Naive thymus-derived CD4-positive, alpha-beta T cell (primary cell): ENCODE measurements at regions of chr12 and their contacts with region 1.

Region 1: GRCh38 chr12:94149119-94149780 is 873 bp downstream of the PLXNC1 start:
- DNase-seq: peak; percentile 23 to 70 (median 45)
- ATAC-seq: peak; percentile 51
- H3K4me3 ChIP-seq: peak overlapping the region; percentile 75
- H3K4me3 Mint-ChIP-seq: peak overlapping the region; percentile 76 to 97 (median 93)
- H3K27ac ChIP-seq: peak overlapping the region; percentile 17
- H3K27ac Mint-ChIP-seq: peak overlapping the region in 3 of 9 donors; percentile 51 to 67 (median 63)
- H3K4me1 ChIP-seq: peaks cover 0 to 17% of the 10 kb centered on the region in 2 donors
- H3K4me1 Mint-ChIP-seq: peaks cover 18 to 53% (median 39%) of the 10 kb centered on the region in 7 donors
- H3K27me3 ChIP-seq: no peaks in the 10 kb centered on the region
- H3K27me3 Mint-ChIP-seq: peaks cover 0 to 31% (median 0%) of the 10 kb centered on the region in 5 donors

Region 2: DNA sequence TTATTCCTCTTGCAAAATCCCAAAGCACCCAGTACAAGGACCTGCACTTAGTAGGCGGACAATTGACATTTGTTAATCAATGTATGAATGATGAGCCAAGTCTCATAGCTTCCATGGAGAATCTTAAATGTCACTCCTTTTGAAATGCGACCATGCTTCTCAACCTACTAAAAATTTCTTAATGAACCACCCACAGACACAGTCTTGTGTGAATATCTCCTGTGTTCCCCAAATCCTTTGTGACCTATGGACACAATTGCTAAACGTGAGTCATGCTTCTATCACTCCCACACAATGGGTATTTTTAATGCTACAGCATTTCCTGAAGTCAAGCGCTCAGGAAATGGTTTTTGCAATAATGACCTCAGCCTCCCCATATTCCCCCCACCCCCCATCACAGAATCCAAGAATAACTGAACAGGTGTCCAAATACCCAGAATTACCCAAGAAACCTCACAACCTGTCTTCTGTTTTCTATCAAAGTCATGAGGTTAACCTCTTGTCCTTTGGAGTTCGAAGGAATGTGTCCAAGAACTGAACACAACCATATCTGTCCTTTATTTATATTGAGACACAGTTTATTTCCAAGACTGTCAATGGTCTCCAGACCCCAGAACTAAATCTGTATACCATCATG is 1610.0 kb before region 1 on chr12:
- CTCF ChIA-PET with region 1: no interaction called
- POLR2A ChIA-PET with region 1: no interaction called
- intact Hi-C with region 1: no loop called
- DNase-seq: no peak
- ATAC-seq: peak; percentile 77
- H3K4me3 ChIP-seq: no peak overlapping the region
- H3K4me3 Mint-ChIP-seq: peak overlapping the region in 5 of 10 donors; percentile 14 to 69 (median 22)
- H3K27ac ChIP-seq: no peak overlapping the region
- H3K27ac Mint-ChIP-seq: peak overlapping the region in 6 of 9 donors; percentile 0 to 90 (median 68)
- H3K4me1 ChIP-seq: peaks cover 23 to 44% of the 10 kb centered on the region in 2 donors
- H3K4me1 Mint-ChIP-seq: peaks cover 21 to 67% (median 47%) of the 10 kb centered on the region in 7 donors
- H3K27me3 ChIP-seq: no peaks in the 10 kb centered on the region
- H3K27me3 Mint-ChIP-seq: no peaks in the 10 kb centered on the region

Region 3: DNA sequence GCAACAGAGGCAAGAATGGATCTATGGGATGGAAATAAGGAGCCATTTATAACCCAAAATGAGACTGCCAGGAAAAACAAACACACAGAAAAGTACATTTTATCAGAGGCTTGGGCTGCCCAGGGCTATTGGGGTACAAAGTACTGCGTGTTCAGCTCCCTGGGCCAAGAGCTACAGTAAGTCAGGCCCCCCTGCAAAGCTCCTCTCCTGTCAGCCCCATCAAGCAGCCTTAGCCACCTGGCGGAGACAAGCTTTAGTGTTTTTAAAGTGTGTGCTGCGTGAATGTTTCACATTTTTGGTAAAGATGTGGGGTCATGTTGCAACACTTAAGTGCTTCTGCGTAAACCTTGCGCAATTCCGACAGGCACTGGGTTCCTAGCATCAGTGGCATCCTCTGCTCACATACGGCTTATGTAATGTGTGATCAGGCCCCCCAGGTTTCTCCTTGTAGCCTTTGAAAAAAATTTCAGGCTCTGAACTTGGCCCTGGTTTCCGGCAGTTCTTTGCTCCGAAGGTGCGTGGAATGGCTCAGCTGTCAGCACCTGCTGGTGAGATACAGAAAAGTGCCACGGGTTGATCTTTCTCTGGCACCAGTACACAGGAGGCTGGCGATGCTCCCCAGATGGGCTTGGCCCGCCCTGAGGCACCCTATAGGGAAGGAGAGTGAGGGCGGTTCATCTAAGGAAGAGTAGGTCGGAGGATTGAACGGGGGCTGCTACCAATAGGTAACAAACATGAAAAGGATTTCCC is 1021.5 kb before region 1 on chr12:
- CTCF ChIA-PET with region 1: no interaction called
- POLR2A ChIA-PET with region 1: no interaction called
- intact Hi-C with region 1: no loop called
- DNase-seq: no peak
- ATAC-seq: peak; percentile 44
- H3K4me3 ChIP-seq: no peak overlapping the region
- H3K4me3 Mint-ChIP-seq: no peak overlapping the region
- H3K27ac ChIP-seq: no peak overlapping the region
- H3K27ac Mint-ChIP-seq: no peak overlapping the region
- H3K4me1 ChIP-seq: no peaks in the 10 kb centered on the region
- H3K4me1 Mint-ChIP-seq: peaks cover 0 to 4% (median 0%) of the 10 kb centered on the region in 7 donors
- H3K27me3 ChIP-seq: no peaks in the 10 kb centered on the region
- H3K27me3 Mint-ChIP-seq: peaks cover 0 to 3% (median 0%) of the 10 kb centered on the region in 5 donors

Region 4: GRCh38 chr12:93441617-93442410 is 707.4 kb before region 1 on chr12 and contains the start of gene UBE2N:
- CTCF ChIA-PET with region 1: no interaction called
- POLR2A ChIA-PET with region 1: interaction called, 3 read pairs
- intact Hi-C with region 1: loop called (anchors 1 kb)
- DNase-seq: peak; percentile 96 to 98 (median 97)
- ATAC-seq: peak; percentile 95
- H3K4me3 ChIP-seq: peak within 1 kb of the TSS; percentile 66
- H3K4me3 Mint-ChIP-seq: peak within 1 kb of the TSS; percentile 89 to 100 (median 97)
- H3K27ac ChIP-seq: peak within 1 kb of the TSS; percentile 98
- H3K27ac Mint-ChIP-seq: peak within 1 kb of the TSS; percentile 96 to 100 (median 98)
- H3K4me1 ChIP-seq: peaks cover 35 to 48% of the 10 kb centered on the region in 2 donors
- H3K4me1 Mint-ChIP-seq: peaks cover 44 to 54% (median 49%) of the 10 kb centered on the region in 7 donors
- H3K27me3 ChIP-seq: no peaks in the 10 kb centered on the region
- H3K27me3 Mint-ChIP-seq: no peaks in the 10 kb centered on the region
- total RNA-seq, gene UBE2N: 76.6 to 180 (median 77.5) TPM

Region 5: DNA sequence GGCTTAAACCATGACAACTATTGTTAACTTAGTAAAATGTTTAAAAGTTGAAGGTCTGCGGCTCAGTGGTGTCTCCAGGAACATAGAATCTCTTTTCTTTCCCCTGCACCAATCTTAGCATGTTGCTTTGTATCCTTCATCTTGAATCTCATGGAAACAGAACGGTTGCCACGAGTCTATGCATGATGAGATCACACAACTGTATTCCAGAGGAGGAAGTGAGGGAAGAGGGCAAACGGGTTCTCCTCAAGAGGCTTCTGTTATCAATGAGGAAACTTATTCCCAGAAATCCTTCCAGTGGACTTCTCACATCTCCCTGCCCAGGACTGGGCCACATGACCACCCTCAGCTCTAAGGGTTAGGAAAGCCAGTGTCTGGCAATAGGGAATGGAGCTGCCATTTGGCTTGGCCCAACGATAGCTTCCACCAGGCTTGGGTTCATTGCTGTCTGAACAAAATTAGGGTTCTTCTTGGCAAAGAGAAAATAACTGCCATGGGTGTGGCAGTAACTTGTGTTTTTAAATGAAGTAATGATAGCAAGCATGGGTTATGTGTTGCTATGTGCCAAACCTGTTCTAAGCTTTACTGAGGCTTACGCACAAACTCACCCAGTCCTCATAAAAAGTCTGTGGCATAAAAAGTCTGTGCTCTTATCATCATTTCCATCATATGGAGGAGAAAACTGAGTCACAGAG is 16.6 kb after region 1 on chr12:
- CTCF ChIA-PET with region 1: no interaction called
- POLR2A ChIA-PET with region 1: interaction called, 10 read pairs
- intact Hi-C with region 1: no loop called
- DNase-seq: no peak
- ATAC-seq: no peak
- H3K4me3 ChIP-seq: no peak overlapping the region
- H3K4me3 Mint-ChIP-seq: no peak overlapping the region
- H3K27ac ChIP-seq: no peak overlapping the region
- H3K27ac Mint-ChIP-seq: no peak overlapping the region
- H3K4me1 ChIP-seq: peaks cover 0 to 6% of the 10 kb centered on the region in 2 donors
- H3K4me1 Mint-ChIP-seq: peaks cover 24 to 46% (median 33%) of the 10 kb centered on the region in 7 donors
- H3K27me3 ChIP-seq: no peaks in the 10 kb centered on the region
- H3K27me3 Mint-ChIP-seq: no peaks in the 10 kb centered on the region

Region 6: GRCh38 chr12:94282675-94283074 is 133.4 kb after region 1 on chr12:
- CTCF ChIA-PET with region 1: no interaction called
- POLR2A ChIA-PET with region 1: no interaction called
- intact Hi-C with region 1: loop called in 1 of 2 experiments (anchors 5 kb)
- DNase-seq: peak in 7 of 9 donors; percentile 29 to 59 (median 39)
- ATAC-seq: peak; percentile 83
- H3K4me3 ChIP-seq: peak overlapping the region; percentile 31
- H3K4me3 Mint-ChIP-seq: peak overlapping the region; percentile 50 to 74 (median 68)
- H3K27ac ChIP-seq: peak overlapping the region; percentile 9
- H3K27ac Mint-ChIP-seq: peak overlapping the region; percentile 77 to 98 (median 88)
- H3K4me1 ChIP-seq: peaks cover 14 to 25% of the 10 kb centered on the region in 2 donors
- H3K4me1 Mint-ChIP-seq: peaks cover 21 to 33% (median 26%) of the 10 kb centered on the region in 7 donors
- H3K27me3 ChIP-seq: no peaks in the 10 kb centered on the region
- H3K27me3 Mint-ChIP-seq: no peaks in the 10 kb centered on the region

Region 7: DNA sequence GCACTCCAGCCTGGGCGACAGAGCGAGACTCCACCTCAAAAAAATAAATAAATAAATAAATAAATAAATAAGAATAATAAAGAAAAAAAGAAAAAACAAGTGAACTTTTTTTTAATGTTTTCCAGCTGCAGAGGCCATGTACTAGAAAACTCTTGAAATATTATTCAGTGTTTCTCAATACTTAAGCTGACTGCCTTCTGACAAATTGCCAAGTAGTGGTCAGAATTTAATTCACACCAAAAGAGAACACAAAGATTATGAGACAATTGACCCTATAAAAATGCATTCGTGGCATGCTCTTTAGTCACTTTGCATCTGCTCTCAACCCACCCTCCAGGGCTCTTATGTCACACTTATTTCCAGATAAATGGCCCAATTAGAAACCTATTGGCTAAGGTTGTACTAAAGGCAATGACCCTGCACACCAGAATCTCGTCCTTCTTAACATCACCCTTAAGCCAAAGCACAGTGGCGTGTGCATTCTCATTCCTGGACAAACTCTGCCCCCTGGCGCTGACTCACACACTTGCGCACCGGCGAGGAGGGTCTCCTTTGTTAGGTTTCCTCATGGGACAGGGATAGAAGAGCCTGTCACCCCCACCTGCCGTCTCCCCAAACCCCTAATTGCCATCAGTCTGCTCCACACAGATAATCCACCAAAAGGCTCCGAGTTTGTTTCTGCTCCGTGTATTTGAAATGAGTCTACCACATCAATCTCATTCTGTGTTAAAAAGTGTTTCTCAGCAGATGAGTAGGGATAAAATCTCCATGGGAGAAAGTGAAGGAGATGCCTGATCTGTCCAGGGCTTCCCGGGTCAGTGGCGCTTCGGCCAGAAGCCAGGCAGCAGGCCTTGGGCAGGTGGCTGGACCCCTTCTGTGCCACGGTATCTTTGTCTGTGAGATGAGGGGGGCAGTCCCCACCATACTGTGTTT is 383.5 kb after region 1 on chr12:
- CTCF ChIA-PET with region 1: interaction called, 6 read pairs
- POLR2A ChIA-PET with region 1: no interaction called
- intact Hi-C with region 1: loop called (anchors 1 kb)
- DNase-seq: peak; percentile 20 to 68 (median 56)
- ATAC-seq: peak; percentile 80
- H3K4me3 ChIP-seq: no peak overlapping the region
- H3K4me3 Mint-ChIP-seq: no peak overlapping the region
- H3K27ac ChIP-seq: no peak overlapping the region
- H3K27ac Mint-ChIP-seq: no peak overlapping the region
- H3K4me1 ChIP-seq: no peaks in the 10 kb centered on the region
- H3K4me1 Mint-ChIP-seq: peaks cover 0 to 17% (median 3%) of the 10 kb centered on the region in 7 donors
- H3K27me3 ChIP-seq: no peaks in the 10 kb centered on the region
- H3K27me3 Mint-ChIP-seq: peaks cover 3 to 19% (median 8%) of the 10 kb centered on the region in 5 donors

Region 8: DNA sequence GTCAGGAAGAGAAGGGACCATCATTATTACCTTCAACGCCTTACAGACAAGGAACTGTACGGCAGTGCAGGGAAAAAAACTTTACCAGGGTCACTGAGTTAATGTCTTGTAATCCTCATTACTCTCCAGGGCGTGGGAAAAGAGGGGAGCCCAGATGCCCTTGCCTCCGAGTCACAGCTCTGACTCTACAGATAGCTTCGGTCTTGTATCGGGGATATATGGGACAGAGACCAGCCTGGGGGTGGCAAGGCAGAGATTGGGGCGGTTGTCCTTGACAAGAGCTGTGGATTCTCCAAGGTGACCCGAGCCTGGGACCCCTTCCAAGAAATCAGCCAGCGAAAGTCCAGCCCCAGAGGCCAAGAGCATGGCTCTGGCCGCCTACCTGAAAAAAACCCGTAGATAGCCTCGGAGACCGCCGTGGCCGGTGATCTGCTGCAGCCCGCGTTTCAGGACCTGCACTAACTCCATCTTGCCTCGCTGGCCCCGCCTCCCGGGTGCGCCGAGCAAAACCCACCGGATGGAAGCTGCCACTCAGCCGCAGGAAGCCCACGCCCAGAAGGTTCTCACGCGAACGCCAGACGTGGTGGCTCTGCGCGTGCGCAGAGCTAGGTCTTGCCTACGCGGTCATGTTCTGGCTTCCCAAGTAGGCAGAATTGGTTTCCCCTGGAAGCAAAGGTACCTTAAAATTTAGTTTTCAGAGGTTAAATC is 854.1 kb after region 1 on chr12 and contains the start of gene NDUFA12:
- CTCF ChIA-PET with region 1: no interaction called
- POLR2A ChIA-PET with region 1: no interaction called
- intact Hi-C with region 1: loop called in 1 of 2 experiments (anchors 10 kb)
- DNase-seq: peak; percentile 89 to 95 (median 92)
- ATAC-seq: peak; percentile 100
- H3K4me3 ChIP-seq: peak within 1 kb of the TSS; percentile 72
- H3K4me3 Mint-ChIP-seq: peak within 1 kb of the TSS; percentile 87 to 97 (median 96)
- H3K27ac ChIP-seq: peak within 1 kb of the TSS; percentile 84
- H3K27ac Mint-ChIP-seq: peak within 1 kb of the TSS; percentile 86 to 97 (median 95)
- H3K4me1 ChIP-seq: peaks cover 27 to 56% of the 10 kb centered on the region in 2 donors
- H3K4me1 Mint-ChIP-seq: peaks cover 39 to 79% (median 64%) of the 10 kb centered on the region in 7 donors
- H3K27me3 ChIP-seq: no peaks in the 10 kb centered on the region
- H3K27me3 Mint-ChIP-seq: no peaks in the 10 kb centered on the region
- total RNA-seq, gene NDUFA12: 57.8 to 123 (median 68.5) TPM